Natural killer cell (primary cell): ENCODE measurements at regions of chr9 and their contacts with region 1.

Region 1: DNA sequence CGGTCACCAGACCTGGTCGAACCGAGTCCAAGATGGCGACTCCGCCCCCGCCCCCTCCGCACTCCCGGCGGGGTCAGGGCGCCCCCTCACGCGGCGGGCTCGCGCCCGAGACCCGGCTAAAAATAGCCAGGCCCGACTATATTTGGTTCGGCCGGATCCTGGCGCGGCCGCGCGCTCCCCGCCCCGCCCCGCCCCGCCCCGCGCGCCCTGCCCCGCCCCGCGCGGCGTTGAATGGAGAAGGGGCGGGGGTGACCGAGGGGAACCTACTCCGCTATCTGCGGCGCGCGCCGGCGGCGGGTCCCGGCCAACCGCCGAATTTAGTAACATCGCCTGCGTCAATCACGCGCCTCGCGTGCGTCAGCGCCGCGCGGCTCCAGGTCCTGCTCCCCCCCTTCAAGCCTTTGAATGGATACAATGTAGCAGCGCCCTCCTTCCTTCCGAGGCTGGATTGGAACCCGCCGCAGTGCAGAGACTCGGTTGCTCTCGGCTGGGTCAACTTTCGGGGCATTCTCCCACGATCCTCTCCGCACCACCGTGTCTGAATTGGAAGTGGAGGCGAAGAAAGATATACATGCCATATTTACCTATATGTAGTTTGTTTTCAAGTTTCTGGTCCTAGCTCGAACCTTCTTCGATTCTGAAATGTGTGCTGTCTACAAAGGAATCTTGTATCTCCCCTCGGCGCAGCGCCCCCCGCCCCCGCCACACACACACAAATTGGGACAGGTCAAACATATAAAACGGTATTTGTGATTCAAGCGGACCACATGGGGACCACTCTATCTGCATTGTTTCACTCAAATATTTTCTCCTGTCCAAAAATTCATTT is 1.6 kb upstream of the NR4A3 start:
- DNase-seq: peak; percentile 93 to 98
- ATAC-seq: peak; percentile 48 to 82 (median 58)
- H3K4me3 ChIP-seq: peak overlapping the region; percentile 79
- H3K4me3 Mint-ChIP-seq: peak overlapping the region; percentile 99
- H3K27ac ChIP-seq: peak overlapping the region; percentile 94
- H3K27ac Mint-ChIP-seq: peak overlapping the region; percentile 96 to 99
- H3K4me1 ChIP-seq: peaks cover 51% of the 10 kb centered on the region
- H3K4me1 Mint-ChIP-seq: peaks cover 55 to 62% of the 10 kb centered on the region in 2 donors
- H3K27me3 ChIP-seq: peaks cover 17% of the 10 kb centered on the region
- H3K27me3 Mint-ChIP-seq: peaks cover 21 to 26% of the 10 kb centered on the region in 2 donors
- CTCF ChIP-seq: no peak

Region 2: GRCh38 chr9:99221621-99222415 is 598.3 kb before region 1 on chr9 and contains the starts of genes ALG2 and SEC61B:
- intact Hi-C with region 1: loop called (anchors 5 kb)
- DNase-seq: peak; percentile 93 to 96
- ATAC-seq: peak; percentile 88 to 95 (median 89)
- H3K4me3 ChIP-seq: peak within 1 kb of the TSS; percentile 84
- H3K4me3 Mint-ChIP-seq: peak within 1 kb of the TSS; percentile 99
- H3K27ac ChIP-seq: peak within 1 kb of the TSS; percentile 97
- H3K27ac Mint-ChIP-seq: peak within 1 kb of the TSS; percentile 99 to 100
- H3K4me1 ChIP-seq: peaks cover 23% of the 10 kb centered on the region
- H3K4me1 Mint-ChIP-seq: peaks cover 73 to 82% of the 10 kb centered on the region in 2 donors
- H3K27me3 ChIP-seq: no peaks in the 10 kb centered on the region
- H3K27me3 Mint-ChIP-seq: no peaks in the 10 kb centered on the region
- CTCF ChIP-seq: no peak
- total RNA-seq, gene ALG2: 17.3 to 23.2 (median 20.7) TPM
- total RNA-seq, gene SEC61B: 78.9 to 95.1 (median 93.8) TPM

Region 3: DNA sequence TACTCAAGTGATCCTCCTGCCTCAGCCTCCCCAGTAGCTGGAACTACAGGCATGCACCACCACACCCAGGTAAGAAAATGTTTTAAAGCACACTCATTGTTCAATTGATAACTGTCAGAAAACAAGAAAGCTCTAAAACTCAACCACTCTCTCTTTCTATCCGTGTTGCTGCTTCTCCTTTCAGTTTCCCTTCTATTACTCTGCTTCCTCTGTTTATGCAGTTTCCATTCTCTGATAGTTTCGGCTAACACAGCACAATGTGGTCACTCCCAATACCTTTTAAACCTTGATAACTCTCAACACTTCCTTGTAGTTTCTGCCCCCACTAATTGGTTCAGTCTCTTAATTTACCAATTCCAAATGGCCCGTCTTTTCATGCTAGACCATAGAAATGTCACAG is 57.6 kb before region 1 on chr9:
- intact Hi-C with region 1: no loop called
- DNase-seq: no peak
- ATAC-seq: peak in 2 of 3 donors; percentile 59 to 67
- H3K4me3 ChIP-seq: no peak overlapping the region
- H3K4me3 Mint-ChIP-seq: no peak overlapping the region
- H3K27ac ChIP-seq: no peak overlapping the region
- H3K27ac Mint-ChIP-seq: no peak overlapping the region
- H3K4me1 ChIP-seq: peaks cover 5% of the 10 kb centered on the region
- H3K4me1 Mint-ChIP-seq: no peaks in the 10 kb centered on the region
- H3K27me3 ChIP-seq: no peaks in the 10 kb centered on the region
- H3K27me3 Mint-ChIP-seq: peaks cover 0 to 2% of the 10 kb centered on the region in 2 donors
- CTCF ChIP-seq: no peak

Region 4: DNA sequence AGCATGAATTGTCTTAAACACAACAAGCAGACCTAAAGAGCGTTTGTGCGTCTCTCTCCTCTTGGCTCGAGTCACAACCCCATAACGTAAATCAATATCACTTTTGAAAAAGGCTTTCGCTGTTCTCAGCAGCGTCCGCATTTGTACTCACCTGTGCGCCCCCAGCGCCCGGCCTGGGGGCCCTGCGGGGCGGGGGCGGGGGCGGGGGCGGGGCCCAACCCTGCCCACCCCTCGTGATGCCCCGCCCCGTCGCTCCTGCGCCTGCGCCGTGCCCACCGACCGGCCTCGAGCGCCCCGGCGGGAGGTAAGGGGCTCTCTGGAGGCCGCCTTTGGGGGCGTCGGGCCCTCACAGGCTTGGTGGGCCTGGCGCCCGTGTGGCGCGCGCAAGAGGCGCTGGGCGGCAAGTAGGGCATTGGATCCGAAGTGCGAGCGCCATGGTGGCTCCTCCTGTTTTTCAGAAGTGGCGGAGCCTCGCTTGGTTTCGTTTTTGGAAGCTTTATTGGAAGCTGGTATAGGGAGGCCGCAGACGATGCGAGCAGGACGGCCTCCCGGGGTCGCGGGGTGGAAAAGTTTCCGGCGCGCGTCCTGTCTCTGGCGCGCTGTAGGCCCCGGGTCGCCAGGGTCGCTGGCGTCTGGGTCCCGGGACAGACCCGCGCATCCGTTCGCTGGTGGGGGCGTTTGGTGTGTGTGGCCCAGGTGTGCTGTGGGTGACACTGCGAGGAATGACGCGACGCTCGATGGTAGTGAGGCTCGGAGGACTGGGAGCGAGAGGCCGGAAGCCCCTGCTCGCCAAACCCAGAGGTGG is 86.5 kb after region 1 on chr9 and contains the start of gene STX17:
- intact Hi-C with region 1: loop called (anchors 1 kb)
- DNase-seq: peak; percentile 81 to 90
- ATAC-seq: peak; percentile 81 to 93 (median 87)
- H3K4me3 ChIP-seq: peak within 1 kb of the TSS; percentile 85
- H3K4me3 Mint-ChIP-seq: peak within 1 kb of the TSS; percentile 97
- H3K27ac ChIP-seq: peak within 1 kb of the TSS; percentile 95
- H3K27ac Mint-ChIP-seq: peak within 1 kb of the TSS; percentile 95 to 96
- H3K4me1 ChIP-seq: peaks cover 11% of the 10 kb centered on the region
- H3K4me1 Mint-ChIP-seq: peaks cover 25 to 28% of the 10 kb centered on the region in 2 donors
- H3K27me3 ChIP-seq: no peaks in the 10 kb centered on the region
- H3K27me3 Mint-ChIP-seq: peaks cover 7 to 9% of the 10 kb centered on the region in 2 donors
- CTCF ChIP-seq: no peak
- total RNA-seq, gene STX17: 28.4 to 41.5 (median 33.8) TPM

Region 5: GRCh38 chr9:100098887-100099721 is 279.0 kb after region 1 on chr9 and contains the starts of genes ERP44 and INVS:
- intact Hi-C with region 1: loop called (anchors 1 kb)
- DNase-seq: peak; percentile 91 to 98
- ATAC-seq: peak; percentile 97 to 100 (median 98)
- H3K4me3 ChIP-seq: peak within 1 kb of the TSS; percentile 73
- H3K4me3 Mint-ChIP-seq: peak within 1 kb of the TSS; percentile 99
- H3K27ac ChIP-seq: peak within 1 kb of the TSS; percentile 73
- H3K27ac Mint-ChIP-seq: peak within 1 kb of the TSS; percentile 95 to 99
- H3K4me1 ChIP-seq: peaks cover 19% of the 10 kb centered on the region
- H3K4me1 Mint-ChIP-seq: peaks cover 46 to 47% of the 10 kb centered on the region in 2 donors
- H3K27me3 ChIP-seq: no peaks in the 10 kb centered on the region
- H3K27me3 Mint-ChIP-seq: no peaks in the 10 kb centered on the region
- CTCF ChIP-seq: no peak
- total RNA-seq, gene ERP44: 14.2 to 15.4 (median 15.1) TPM
- total RNA-seq, gene INVS: 24.5 to 30.6 (median 27.4) TPM